ENCODE measurements at regions of chr2 and their contacts with region 1.

Region 1: DNA sequence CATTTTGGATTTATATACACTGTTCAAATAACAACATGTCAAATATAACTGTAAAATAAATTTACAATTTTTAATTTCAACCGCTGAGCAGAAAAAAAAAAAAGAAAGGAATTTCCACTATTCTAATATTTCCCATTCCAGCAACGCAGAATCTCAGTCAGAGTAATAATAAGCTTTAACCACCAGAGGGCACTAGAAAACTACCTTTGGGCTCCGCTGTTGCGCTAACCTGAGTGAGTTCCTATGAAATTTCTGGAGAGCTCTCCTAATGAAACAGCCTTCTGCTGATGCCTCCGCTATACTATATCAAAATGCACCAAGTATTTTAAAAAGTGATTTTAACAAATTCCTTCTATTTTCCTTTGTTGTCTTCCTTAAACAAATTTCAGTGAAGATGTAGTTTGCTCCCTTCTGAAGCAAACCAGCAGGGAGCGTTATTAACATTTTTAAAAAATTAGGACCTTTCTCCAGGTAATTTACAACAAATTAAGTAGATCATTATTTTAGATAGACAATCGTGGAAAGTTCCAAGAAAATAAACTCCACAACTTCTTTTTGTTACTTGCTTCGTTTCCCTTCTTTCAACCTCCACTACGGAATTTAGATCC is 23.0 kb downstream of the ERMN start:
- DNase-seq: peak in 7 of 9 donors; percentile 33 to 72 (median 59)
- ATAC-seq: peak; percentile 89
- H3K4me3 ChIP-seq: no peak overlapping the region
- H3K4me3 Mint-ChIP-seq: peak overlapping the region in 4 of 10 donors; percentile 16 to 54 (median 38)
- H3K27ac ChIP-seq: no peak overlapping the region
- H3K27ac Mint-ChIP-seq: no peak overlapping the region
- H3K4me1 ChIP-seq: peaks cover 0 to 9% of the 10 kb centered on the region in 2 donors
- H3K4me1 Mint-ChIP-seq: peaks cover 7 to 33% (median 23%) of the 10 kb centered on the region in 7 donors
- H3K27me3 ChIP-seq: no peaks in the 10 kb centered on the region
- H3K27me3 Mint-ChIP-seq: peaks cover 0 to 25% (median 0%) of the 10 kb centered on the region in 5 donors

Region 2: DNA sequence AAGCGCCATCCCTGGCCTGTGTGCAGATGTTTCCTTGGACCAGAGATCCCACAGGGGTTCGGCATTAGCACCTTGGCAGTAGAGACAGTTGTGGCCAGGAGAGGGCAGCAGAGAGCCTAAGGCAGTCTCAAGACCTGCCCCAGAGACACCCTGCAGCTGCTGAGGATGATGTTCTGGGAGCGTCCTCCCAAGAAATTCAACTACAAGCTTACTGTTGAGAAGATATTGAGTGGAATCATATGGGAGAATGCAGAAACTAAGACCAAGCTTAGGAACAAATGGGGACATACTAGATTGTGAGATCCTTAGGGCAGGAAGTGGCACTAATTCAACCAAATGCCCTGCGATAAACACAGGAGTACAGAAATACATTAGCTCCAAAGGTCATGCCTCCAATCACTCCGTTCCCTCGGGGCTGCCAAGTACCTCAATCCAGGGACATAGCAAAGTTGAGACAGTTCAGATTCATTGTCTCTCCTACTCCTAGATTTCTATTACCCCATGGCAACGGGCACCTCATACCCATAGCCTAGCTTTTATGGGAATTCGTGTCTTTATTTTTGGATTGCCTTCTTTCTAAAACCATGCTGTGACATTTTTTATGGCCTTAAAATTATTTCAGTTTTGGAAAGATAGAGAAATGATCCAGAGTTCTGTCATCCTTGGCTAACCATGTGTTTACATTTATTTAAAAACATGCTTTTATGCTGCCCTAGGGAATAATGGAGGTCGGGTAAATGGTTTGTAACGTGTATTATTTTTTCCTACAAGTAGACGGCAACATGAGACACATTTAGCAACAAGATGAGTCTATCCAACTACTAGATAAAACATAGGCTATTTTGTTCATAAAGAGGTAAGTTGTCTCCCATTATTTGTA is 25.3 kb after region 1 on chr2:
- CTCF ChIA-PET with region 1: interaction called, 17 read pairs
- POLR2A ChIA-PET with region 1: no interaction called
- intact Hi-C with region 1: loop called (anchors 1 kb)
- DNase-seq: peak; percentile 60 to 89 (median 81)
- ATAC-seq: peak; percentile 97
- H3K4me3 ChIP-seq: no peak overlapping the region
- H3K4me3 Mint-ChIP-seq: peak overlapping the region; percentile 47 to 81 (median 60)
- H3K27ac ChIP-seq: peak overlapping the region; percentile 19
- H3K27ac Mint-ChIP-seq: peak overlapping the region; percentile 18 to 96 (median 85)
- H3K4me1 ChIP-seq: peaks cover 23 to 46% of the 10 kb centered on the region in 2 donors
- H3K4me1 Mint-ChIP-seq: peaks cover 36 to 65% (median 58%) of the 10 kb centered on the region in 7 donors
- H3K27me3 ChIP-seq: no peaks in the 10 kb centered on the region
- H3K27me3 Mint-ChIP-seq: no peaks in the 10 kb centered on the region

Region 3: GRCh38 chr2:157497638-157498314 is 195.2 kb after region 1 on chr2:
- CTCF ChIA-PET with region 1: interaction called, 29 read pairs
- POLR2A ChIA-PET with region 1: interaction called, 3 read pairs
- intact Hi-C with region 1: loop called (anchors 1 to 2 kb)
- DNase-seq: peak in 7 of 9 donors; percentile 13 to 61 (median 49)
- ATAC-seq: peak; percentile 94
- H3K4me3 ChIP-seq: no peak overlapping the region
- H3K4me3 Mint-ChIP-seq: no peak overlapping the region
- H3K27ac ChIP-seq: no peak overlapping the region
- H3K27ac Mint-ChIP-seq: peak overlapping the region in 1 of 9 donors; percentile 29
- H3K4me1 ChIP-seq: peaks cover 0 to 8% of the 10 kb centered on the region in 2 donors
- H3K4me1 Mint-ChIP-seq: peaks cover 8 to 40% (median 37%) of the 10 kb centered on the region in 7 donors
- H3K27me3 ChIP-seq: no peaks in the 10 kb centered on the region
- H3K27me3 Mint-ChIP-seq: no peaks in the 10 kb centered on the region

Region 4: DNA sequence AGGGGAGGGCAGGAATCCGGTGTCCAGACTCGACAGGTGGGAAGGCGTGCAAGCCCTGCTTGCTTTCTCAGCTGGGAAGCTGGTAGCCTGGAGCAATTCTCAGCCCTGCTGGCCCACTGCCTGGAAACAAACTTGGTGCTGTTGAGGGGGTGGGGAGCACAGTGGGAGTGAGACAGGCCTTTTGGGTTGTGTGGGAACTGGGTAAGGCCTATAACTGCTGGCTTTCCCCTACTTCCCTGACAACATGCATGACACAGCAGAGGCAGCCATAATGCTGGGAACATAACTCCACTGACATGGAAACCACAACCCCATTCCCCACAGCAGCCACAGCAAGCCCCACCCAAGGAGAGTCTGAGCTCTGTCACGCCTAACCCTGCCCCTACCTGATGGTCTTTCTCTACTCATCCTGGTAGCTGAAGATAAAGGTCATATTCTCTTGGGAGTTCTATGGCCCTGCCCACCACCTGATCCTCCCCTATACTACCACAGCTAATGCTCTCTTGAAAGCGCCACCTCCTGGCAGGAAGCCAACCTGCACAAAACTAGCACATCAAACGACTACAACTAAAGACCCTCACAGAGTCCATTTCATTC is 449.0 kb after region 1 on chr2:
- CTCF ChIA-PET with region 1: interaction called, 20 read pairs
- POLR2A ChIA-PET with region 1: no interaction called
- intact Hi-C with region 1: loop called in 1 of 2 experiments (anchors 1 kb)
- DNase-seq: peak in 5 of 9 donors; percentile 8 to 23 (median 13)
- ATAC-seq: no peak
- H3K4me3 ChIP-seq: no peak overlapping the region
- H3K4me3 Mint-ChIP-seq: no peak overlapping the region
- H3K27ac ChIP-seq: no peak overlapping the region
- H3K27ac Mint-ChIP-seq: no peak overlapping the region
- H3K4me1 ChIP-seq: no peaks in the 10 kb centered on the region
- H3K4me1 Mint-ChIP-seq: peaks cover 0 to 36% (median 3%) of the 10 kb centered on the region in 7 donors
- H3K27me3 ChIP-seq: no peaks in the 10 kb centered on the region
- H3K27me3 Mint-ChIP-seq: no peaks in the 10 kb centered on the region

Region 5: GRCh38 chr2:157777427-157777826 is 474.8 kb after region 1 on chr2:
- CTCF ChIA-PET with region 1: interaction called, 12 read pairs
- POLR2A ChIA-PET with region 1: no interaction called
- intact Hi-C with region 1: loop called (anchors 1 to 5 kb)
- DNase-seq: peak in 7 of 9 donors; percentile 12 to 57 (median 43)
- ATAC-seq: peak; percentile 57
- H3K4me3 ChIP-seq: no peak overlapping the region
- H3K4me3 Mint-ChIP-seq: no peak overlapping the region
- H3K27ac ChIP-seq: no peak overlapping the region
- H3K27ac Mint-ChIP-seq: no peak overlapping the region
- H3K4me1 ChIP-seq: peaks cover 0 to 3% of the 10 kb centered on the region in 2 donors
- H3K4me1 Mint-ChIP-seq: peaks cover 0 to 17% (median 13%) of the 10 kb centered on the region in 7 donors
- H3K27me3 ChIP-seq: no peaks in the 10 kb centered on the region
- H3K27me3 Mint-ChIP-seq: no peaks in the 10 kb centered on the region

Region 6: GRCh38 chr2:158006961-158007719 is 704.5 kb after region 1 on chr2:
- CTCF ChIA-PET with region 1: interaction called, 27 read pairs
- POLR2A ChIA-PET with region 1: no interaction called
- intact Hi-C with region 1: loop called (anchors 1 kb)
- DNase-seq: peak in 3 of 9 donors; percentile 14 to 20 (median 18)
- ATAC-seq: peak; percentile 55
- H3K4me3 ChIP-seq: no peak overlapping the region
- H3K4me3 Mint-ChIP-seq: no peak overlapping the region
- H3K27ac ChIP-seq: no peak overlapping the region
- H3K27ac Mint-ChIP-seq: peak overlapping the region in 1 of 9 donors; percentile 1
- H3K4me1 ChIP-seq: no peaks in the 10 kb centered on the region
- H3K4me1 Mint-ChIP-seq: peaks cover 5 to 26% (median 8%) of the 10 kb centered on the region in 7 donors
- H3K27me3 ChIP-seq: no peaks in the 10 kb centered on the region
- H3K27me3 Mint-ChIP-seq: peaks cover 0 to 9% (median 2%) of the 10 kb centered on the region in 5 donors

Measured in naive thymus-derived CD4-positive, alpha-beta T cell (primary cell).